ENCODE measurements at regions of chr2 and their contacts with region 1.

Region 1: DNA sequence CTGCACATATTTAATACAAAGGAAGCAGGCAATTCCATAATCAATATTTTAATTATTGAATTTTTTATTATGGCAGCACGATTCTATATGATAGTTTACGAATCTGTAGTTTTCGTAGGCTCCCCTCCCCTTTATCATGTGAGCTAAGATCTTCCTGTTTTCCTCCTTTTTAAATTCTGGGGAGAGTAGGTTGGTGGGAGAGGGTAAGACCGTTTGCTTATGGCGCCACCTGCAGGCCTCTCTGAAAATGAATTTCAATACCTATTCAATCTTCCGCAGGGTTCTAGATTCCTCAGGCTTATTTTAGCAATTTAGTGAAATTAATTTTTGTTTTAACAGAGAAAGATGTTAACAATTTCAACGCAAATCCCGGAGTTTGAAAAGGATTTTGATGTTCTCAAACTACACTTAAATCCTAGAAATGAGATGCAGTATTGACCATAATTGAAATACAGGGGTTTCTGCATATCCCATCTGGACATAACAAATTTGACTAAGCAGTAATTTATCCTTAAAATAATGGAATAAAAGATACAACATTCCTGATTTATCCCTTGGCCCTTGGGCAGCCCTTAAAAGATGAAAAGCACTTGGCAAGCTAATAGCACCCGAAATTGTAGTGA is 12.8 kb upstream of the GBX2 start:
- DNase-seq: peak; percentile 80 to 87
- ATAC-seq: peak; percentile 14 to 40; a peak in 4 of 6 replicates
- H3K4me3 ChIP-seq: peak overlapping the region; percentile 70; the same call in 2 of the 3 replicates
- H3K27ac ChIP-seq: no peak overlapping the region
- H3K4me1 ChIP-seq: peaks cover 4% of the 10 kb centered on the region; the same call in 1 of the 3 replicates
- CTCF ChIP-seq: peak; percentile 95
- EP300 ChIP-seq: no peak
- POLR2A ChIP-seq: no peak
- RAD21 ChIP-seq: peak; percentile 87 to 89

Region 2: GRCh38 chr2:235766278-235766677 is 414.7 kb before region 1 on chr2:
- CTCF ChIA-PET with region 1: interaction called, 25 read pairs
- POLR2A ChIA-PET with region 1: interaction called, 3 read pairs
- DNase-seq: peak; percentile 65 to 81
- ATAC-seq: peak; percentile 93 to 97
- H3K4me3 ChIP-seq: no peak overlapping the region
- H3K27ac ChIP-seq: no peak overlapping the region
- H3K4me1 ChIP-seq: peaks cover 9% of the 10 kb centered on the region; the same call in 1 of the 3 replicates
- CTCF ChIP-seq: peak; percentile 89
- EP300 ChIP-seq: no peak
- POLR2A ChIP-seq: no peak
- RAD21 ChIP-seq: peak; percentile 61 to 69

Region 3: DNA sequence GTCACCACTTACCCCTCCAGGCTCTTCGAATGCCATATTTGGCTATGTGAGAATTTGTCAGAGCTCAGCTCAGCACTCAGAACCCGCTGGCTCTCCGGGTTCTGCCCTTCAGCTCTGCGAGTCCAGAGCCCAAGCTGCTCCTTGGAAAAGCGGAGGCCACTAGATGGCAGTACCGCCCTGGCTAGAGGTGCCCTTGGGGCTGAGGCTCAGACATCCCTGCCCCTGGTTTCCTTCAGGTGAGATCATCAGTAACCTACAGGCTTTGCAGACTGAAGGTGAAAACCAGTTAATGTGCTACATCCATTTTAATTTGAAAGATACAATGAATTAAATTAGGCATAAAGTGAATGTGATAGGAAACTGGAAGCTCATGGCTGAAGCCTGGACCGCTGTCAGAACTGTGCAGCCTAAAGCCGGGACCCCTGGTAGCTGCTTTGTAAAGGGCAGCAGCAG is 401.5 kb before region 1 on chr2:
- CTCF ChIA-PET with region 1: interaction called, 222 read pairs
- POLR2A ChIA-PET with region 1: interaction called, 4 read pairs
- DNase-seq: peak; percentile 70 to 72
- ATAC-seq: peak; percentile 96 to 99
- H3K4me3 ChIP-seq: no peak overlapping the region
- H3K27ac ChIP-seq: no peak overlapping the region
- H3K4me1 ChIP-seq: no peaks in the 10 kb centered on the region
- CTCF ChIP-seq: peak; percentile 87
- EP300 ChIP-seq: no peak
- POLR2A ChIP-seq: no peak
- RAD21 ChIP-seq: peak; percentile 85 to 87

Region 4: GRCh38 chr2:236021499-236022057 is 159.4 kb before region 1 on chr2:
- CTCF ChIA-PET with region 1: no interaction called
- POLR2A ChIA-PET with region 1: no interaction called
- DNase-seq: no peak
- ATAC-seq: no peak
- H3K4me3 ChIP-seq: no peak overlapping the region
- H3K27ac ChIP-seq: no peak overlapping the region
- H3K4me1 ChIP-seq: no peaks in the 10 kb centered on the region
- CTCF ChIP-seq: no peak
- EP300 ChIP-seq: no peak
- POLR2A ChIP-seq: no peak
- RAD21 ChIP-seq: no peak

Region 5: DNA sequence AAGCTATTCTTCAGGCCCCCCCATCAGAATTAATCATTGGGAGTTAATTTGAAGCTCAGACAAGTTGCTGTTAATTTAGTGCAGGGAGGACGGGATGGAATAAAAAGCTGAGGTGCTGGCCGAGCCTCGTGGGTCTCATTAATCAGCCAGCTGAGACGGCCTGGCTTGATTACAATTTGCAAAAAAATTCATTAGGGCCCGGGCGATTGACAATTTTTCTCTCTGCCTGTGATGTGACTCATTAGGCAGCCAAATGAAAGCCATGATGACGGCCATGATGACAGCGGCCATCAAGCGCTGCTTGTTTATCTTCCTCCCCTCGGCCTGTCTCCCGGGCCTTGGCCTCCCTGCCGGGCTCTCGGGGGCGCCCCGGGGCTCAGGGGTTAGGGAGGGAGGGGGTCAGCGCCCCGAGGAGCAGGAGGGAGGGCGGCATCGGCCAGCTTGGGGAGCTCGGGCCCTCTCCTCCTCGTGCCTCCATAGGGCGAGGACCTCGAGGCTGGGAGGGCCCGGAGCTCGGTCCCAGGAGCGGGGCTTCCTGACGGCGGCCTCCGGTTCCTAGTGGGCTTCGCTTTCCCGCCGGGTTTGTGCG is 18.0 kb before region 1 on chr2:
- CTCF ChIA-PET with region 1: interaction called, 28 read pairs
- POLR2A ChIA-PET with region 1: interaction called, 10 read pairs
- DNase-seq: no peak
- ATAC-seq: no peak
- H3K4me3 ChIP-seq: no peak overlapping the region
- H3K27ac ChIP-seq: no peak overlapping the region
- H3K4me1 ChIP-seq: 0 out of 3 replicates have a peak, but pooled peaks cover 4% of the 10 kb centered on the region
- CTCF ChIP-seq: no peak
- EP300 ChIP-seq: no peak
- POLR2A ChIP-seq: no peak
- RAD21 ChIP-seq: no peak

Region 6: DNA sequence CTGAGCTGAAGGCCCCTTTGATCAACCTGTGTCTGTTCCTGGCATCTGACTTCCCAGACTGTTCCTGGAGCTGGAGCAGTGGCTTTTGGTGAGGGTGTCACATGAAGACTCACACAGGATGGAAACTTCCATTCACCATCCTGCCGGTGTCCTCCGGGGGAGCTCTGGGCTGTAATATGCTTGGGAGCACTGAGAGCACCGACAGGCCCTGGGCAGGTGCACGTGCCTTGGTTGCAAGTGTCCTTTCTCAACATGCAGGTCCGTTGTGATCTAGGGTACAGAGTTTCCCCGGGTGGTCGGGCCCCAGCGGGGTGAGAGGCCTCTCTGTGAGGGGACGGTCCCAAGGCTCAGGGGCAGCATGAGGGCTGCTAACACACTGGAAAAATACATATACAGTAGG is 12.1 kb after region 1 on chr2:
- CTCF ChIA-PET with region 1: interaction called, 26 read pairs
- POLR2A ChIA-PET with region 1: no interaction called
- DNase-seq: no peak
- ATAC-seq: peak in 1 of 2 experiments; percentile 35; a peak in 1 of 6 replicates
- H3K4me3 ChIP-seq: no peak overlapping the region
- H3K27ac ChIP-seq: no peak overlapping the region
- H3K4me1 ChIP-seq: no peaks in the 10 kb centered on the region
- CTCF ChIP-seq: no peak
- EP300 ChIP-seq: no peak
- POLR2A ChIP-seq: no peak
- RAD21 ChIP-seq: no peak

Region 7: GRCh38 chr2:236273126-236273525 is 92.2 kb after region 1 on chr2:
- CTCF ChIA-PET with region 1: no interaction called
- POLR2A ChIA-PET with region 1: no interaction called
- DNase-seq: no peak
- ATAC-seq: no peak
- H3K4me3 ChIP-seq: no peak overlapping the region
- H3K27ac ChIP-seq: no peak overlapping the region
- H3K4me1 ChIP-seq: no peaks in the 10 kb centered on the region
- CTCF ChIP-seq: no peak
- EP300 ChIP-seq: no peak
- POLR2A ChIP-seq: no peak
- RAD21 ChIP-seq: no peak

Region 8: DNA sequence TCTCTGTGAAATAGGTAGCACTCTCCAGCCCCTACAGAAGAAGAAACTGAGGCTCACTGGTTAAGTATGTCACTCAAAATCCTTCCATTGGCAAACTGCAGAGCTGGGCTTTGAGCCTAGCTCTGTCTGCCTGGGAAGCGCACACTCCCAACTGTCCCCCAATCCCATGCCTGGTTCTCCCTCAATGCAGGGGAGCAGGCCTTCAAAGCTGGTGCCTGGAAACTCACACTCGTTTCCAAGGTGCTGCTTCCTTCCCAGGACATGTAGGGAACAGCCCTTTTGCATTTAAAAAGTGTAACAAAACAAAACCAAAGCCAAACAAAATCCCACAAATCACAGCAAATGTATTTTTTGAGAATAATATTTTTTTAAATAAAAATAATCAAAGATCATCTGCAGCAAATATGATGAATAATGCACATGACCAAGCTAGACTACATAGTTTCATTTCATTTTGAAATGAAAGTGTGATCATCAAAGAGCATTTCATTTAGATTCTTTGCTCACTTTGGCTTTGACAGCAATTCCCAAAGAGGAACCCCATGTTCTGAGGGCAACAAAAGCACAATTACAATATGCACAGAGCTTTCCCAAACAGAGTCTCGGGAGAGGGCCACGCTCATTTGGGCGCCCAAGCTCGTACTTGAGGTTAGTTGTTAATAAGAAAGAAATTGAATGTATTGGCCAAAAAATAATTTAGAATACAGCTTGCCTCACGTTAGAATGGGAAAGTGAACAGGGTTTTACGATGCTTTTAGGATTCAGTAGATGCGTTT is 292.0 kb after region 1 on chr2:
- CTCF ChIA-PET with region 1: no interaction called
- POLR2A ChIA-PET with region 1: no interaction called
- DNase-seq: no peak
- ATAC-seq: no peak
- H3K4me3 ChIP-seq: no peak overlapping the region
- H3K27ac ChIP-seq: no peak overlapping the region
- H3K4me1 ChIP-seq: no peaks in the 10 kb centered on the region
- CTCF ChIP-seq: no peak
- EP300 ChIP-seq: no peak
- POLR2A ChIP-seq: no peak
- RAD21 ChIP-seq: no peak

Measured in A549 (cell line).